ENCODE measurements at regions of chr12 and their contacts with region 1.

Region 1: GRCh38 chr12:108562348-108563135 is at the start of gene ISCU:
- DNase-seq: peak; percentile 99
- H3K4me3 ChIP-seq: peak within 1 kb of the TSS; percentile 71 to 98 (median 96)
- H3K27ac ChIP-seq: peak within 1 kb of the TSS; percentile 90 to 98 (median 96)
- H3K4me1 ChIP-seq: peaks cover 19 to 67% (median 45%) of the 10 kb centered on the region in 4 donors
- H3K27me3 ChIP-seq: no peaks in the 10 kb centered on the region
- CTCF ChIP-seq: no peak
- EP300 ChIP-seq: no peak
- POLR2A ChIP-seq: peak; percentile 96
- total RNA-seq, gene ISCU: 113 to 155 (median 130) TPM

Region 2: DNA sequence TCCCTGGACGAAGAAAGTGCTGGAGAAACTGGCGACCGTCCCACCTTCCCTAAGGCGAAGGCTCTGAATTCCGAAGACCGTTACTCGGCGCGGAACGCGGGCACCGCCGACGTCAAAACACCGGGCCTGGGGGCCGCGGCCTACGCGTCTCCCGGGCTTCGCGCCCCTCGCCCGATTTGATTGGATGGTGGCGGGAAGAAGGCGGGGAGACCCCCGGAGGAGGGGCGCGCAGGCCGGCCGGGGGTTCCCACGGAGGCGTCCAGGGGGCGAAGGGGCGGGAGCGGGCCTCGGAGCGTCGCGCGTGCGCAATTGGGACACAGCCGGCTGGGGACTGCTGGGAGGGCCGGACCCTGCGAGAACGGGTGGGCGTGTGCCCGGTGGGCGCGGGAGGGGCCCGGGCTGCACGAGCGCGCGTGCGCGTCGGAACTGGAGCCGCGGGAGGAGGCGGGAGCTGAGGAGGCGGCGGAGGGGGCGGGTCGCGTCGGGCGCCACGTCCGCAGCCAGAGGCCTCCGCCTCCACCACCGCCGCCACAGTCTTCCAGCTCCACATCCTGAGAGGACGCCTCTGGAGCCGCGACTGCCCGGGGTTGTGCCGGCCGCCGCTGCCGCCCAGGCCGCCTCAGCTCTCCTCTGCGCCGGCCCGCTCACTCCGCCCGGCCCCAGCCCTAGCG is 1607.0 kb before region 1 on chr12 and contains the start of gene TMEM263:
- in situ Hi-C with region 1: no loop called
- intact Hi-C with region 1: loop called (anchors 10 kb)
- DNase-seq: peak; percentile 93
- H3K4me3 ChIP-seq: peak within 1 kb of the TSS; percentile 55 to 95 (median 86)
- H3K27ac ChIP-seq: peak within 1 kb of the TSS; percentile 94 to 98 (median 95)
- H3K4me1 ChIP-seq: peaks cover 9 to 40% (median 28%) of the 10 kb centered on the region in 4 donors
- H3K27me3 ChIP-seq: no peaks in the 10 kb centered on the region
- CTCF ChIP-seq: no peak
- EP300 ChIP-seq: no peak
- POLR2A ChIP-seq: peak; percentile 79
- total RNA-seq, gene TMEM263: 13.5 to 34.6 (median 18.7) TPM

Region 3: DNA sequence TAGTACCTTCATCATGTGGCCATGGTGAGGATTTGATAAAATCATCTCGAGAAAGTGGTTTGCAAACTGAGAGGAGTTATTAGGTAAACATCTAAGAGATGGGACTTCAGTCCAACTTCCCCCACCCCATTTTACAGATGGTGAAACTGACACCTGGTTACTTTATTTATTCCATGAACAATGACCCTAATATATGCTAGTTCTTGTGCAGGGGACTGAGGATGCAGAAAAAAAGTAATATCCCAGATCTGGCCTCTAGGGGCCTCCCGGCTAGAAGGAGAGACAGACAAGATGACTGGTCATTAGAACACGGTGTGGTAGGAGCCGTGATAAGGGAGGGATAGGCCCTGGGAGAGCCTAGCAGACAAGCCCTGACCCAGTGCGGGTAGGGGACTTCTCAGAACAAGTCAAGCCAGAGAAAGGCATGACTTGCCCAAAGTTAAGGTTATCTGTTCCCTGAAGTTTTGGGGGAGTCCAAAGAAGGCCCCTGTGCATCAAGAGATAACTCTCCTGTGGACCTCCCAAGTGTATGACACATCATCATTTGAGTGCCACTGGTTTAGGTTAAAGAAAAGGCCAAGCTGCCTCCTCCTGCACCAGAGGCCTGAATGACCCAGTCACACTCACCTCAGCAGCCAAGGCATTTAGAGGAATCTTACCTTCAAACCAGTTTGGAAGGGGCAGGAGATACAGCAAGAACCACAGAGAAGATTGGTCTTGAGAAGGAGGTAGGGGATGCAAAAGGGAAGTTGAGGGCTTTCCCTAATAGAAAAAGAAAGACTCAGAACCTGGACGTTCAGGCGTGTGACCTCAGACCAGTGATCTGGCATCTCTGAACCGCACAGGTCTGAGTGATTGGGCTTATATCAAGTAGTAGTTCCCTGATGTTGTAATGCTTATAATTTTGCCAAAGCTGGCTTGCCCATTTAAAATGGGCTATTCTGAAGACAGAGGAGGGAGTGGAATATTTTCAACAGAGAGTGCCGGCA is 225.0 kb before region 1 on chr12:
- in situ Hi-C with region 1: no loop called
- intact Hi-C with region 1: no loop called
- DNase-seq: no peak
- H3K4me3 ChIP-seq: peak overlapping the region in 2 of 4 donors; percentile 4
- H3K27ac ChIP-seq: peak overlapping the region; percentile 43 to 66 (median 52)
- H3K4me1 ChIP-seq: peaks cover 0 to 15% (median 3%) of the 10 kb centered on the region in 4 donors
- H3K27me3 ChIP-seq: peaks cover 14% of the 10 kb centered on the region
- CTCF ChIP-seq: peak in 4 of 5 experiments; percentile 31 to 41 (median 34)
- EP300 ChIP-seq: no peak
- POLR2A ChIP-seq: peak; percentile 27

Region 4: GRCh38 chr12:108618079-108618952 is 55.8 kb after region 1 on chr12:
- in situ Hi-C with region 1: loop called in 3 of 4 experiments (anchors 5 to 10 kb)
- intact Hi-C with region 1: loop called (anchors 5 kb)
- DNase-seq: peak; percentile 84
- H3K4me3 ChIP-seq: no peak overlapping the region
- H3K27ac ChIP-seq: peak overlapping the region in 1 of 4 donors; percentile 40
- H3K4me1 ChIP-seq: peaks cover 0 to 23% (median 0%) of the 10 kb centered on the region in 4 donors
- H3K27me3 ChIP-seq: no peaks in the 10 kb centered on the region
- CTCF ChIP-seq: peak; percentile 91 to 99 (median 97)
- EP300 ChIP-seq: no peak
- POLR2A ChIP-seq: no peak

Region 5: GRCh38 chr12:108803428-108804105 is 241.0 kb after region 1 on chr12:
- in situ Hi-C with region 1: loop called in 2 of 4 experiments (anchors 10 kb)
- intact Hi-C with region 1: no loop called
- DNase-seq: peak; percentile 82
- H3K4me3 ChIP-seq: no peak overlapping the region
- H3K27ac ChIP-seq: peak overlapping the region; percentile 80 to 93 (median 88)
- H3K4me1 ChIP-seq: peaks cover 15 to 63% (median 37%) of the 10 kb centered on the region in 4 donors
- H3K27me3 ChIP-seq: no peaks in the 10 kb centered on the region
- CTCF ChIP-seq: peak; percentile 92 to 97 (median 96)
- EP300 ChIP-seq: peak; percentile 38
- POLR2A ChIP-seq: no peak

Region 6: DNA sequence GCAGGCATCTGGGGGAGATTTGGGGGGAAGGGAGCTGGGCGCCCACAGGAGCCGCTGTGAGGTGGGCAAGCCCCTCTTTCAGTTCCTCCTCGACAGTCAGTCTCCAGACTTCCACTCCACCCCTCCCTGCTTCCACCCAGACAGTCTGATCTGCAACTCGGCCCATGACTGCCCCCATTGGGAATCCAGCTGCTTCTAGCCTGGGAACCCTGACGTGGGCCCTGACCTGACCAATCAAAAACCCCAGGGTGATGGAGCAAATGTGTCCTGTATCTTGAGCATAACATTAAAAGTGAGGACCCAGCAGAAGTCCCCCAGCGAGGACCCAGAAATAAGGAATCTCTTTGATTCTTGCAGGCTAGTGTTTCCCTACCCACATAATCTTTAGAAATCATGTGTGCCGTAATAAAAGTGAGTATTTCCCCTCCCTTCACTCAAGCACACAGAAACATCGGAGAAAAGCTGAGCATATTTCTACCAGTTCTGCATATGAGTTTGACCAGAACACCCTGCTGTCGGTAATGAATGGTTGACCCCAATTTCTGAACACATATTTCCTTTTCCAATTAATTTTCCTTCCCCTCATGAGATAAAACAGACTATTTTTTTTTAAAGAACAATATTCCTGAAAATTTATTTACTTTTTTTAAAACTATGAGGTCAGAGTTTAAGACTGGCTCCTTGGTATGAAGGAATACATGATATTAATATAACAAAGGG is 288.5 kb after region 1 on chr12:
- in situ Hi-C with region 1: no loop called
- intact Hi-C with region 1: loop called (anchors 5 kb)
- DNase-seq: no peak
- H3K4me3 ChIP-seq: no peak overlapping the region
- H3K27ac ChIP-seq: peak overlapping the region; percentile 28 to 94 (median 64)
- H3K4me1 ChIP-seq: peaks cover 8 to 63% (median 26%) of the 10 kb centered on the region in 4 donors
- H3K27me3 ChIP-seq: no peaks in the 10 kb centered on the region
- CTCF ChIP-seq: no peak
- EP300 ChIP-seq: no peak
- POLR2A ChIP-seq: no peak

Region 7: DNA sequence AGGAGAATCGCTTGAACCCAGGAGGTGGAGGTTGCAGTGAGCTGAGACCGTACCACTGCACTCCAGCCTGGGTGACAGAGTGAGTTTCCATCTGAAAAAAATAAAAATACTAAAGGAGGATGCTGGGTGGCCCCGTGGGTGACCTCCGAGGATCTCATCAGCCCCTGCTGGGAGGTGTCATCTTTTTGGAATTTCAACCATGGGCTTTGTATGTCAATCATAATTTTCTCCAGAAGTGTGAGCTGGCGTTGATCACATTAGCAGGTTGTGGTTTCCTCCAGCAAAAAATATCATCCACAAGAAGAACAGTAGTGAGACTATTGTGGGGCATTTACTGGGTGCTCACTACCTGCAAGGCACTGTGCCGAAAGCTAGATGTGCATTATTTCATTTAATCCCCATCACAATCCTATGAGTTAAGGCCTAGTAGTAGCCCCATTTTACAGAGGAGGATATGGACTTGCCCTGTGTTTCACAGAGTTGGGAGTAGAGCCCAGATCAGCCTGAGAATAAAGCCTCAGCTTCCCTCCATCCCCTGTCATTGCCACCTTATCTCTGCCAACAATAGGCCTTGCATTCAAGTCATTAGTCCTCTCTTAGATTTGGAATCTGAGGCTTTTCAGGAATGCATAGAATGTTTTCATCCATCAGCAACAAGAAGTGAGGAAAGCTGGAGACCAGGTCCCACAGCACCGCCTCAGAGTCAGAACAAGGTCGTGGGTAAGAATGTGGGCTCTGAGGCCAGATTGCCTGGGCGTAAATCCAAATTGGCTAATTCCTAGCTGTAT is 418.5 kb after region 1 on chr12:
- in situ Hi-C with region 1: no loop called
- intact Hi-C with region 1: no loop called
- DNase-seq: no peak
- H3K4me3 ChIP-seq: no peak overlapping the region
- H3K27ac ChIP-seq: no peak overlapping the region
- H3K4me1 ChIP-seq: no peaks in the 10 kb centered on the region
- H3K27me3 ChIP-seq: no peaks in the 10 kb centered on the region
- CTCF ChIP-seq: no peak
- EP300 ChIP-seq: no peak
- POLR2A ChIP-seq: no peak

Region 8: GRCh38 chr12:109052414-109053323 is 490.1 kb after region 1 on chr12 and contains the start of gene USP30:
- in situ Hi-C with region 1: no loop called
- intact Hi-C with region 1: loop called (anchors 2 kb)
- DNase-seq: peak; percentile 89
- H3K4me3 ChIP-seq: peak within 1 kb of the TSS; percentile 76 to 100 (median 88)
- H3K27ac ChIP-seq: peak within 1 kb of the TSS; percentile 90 to 96 (median 92)
- H3K4me1 ChIP-seq: peaks cover 14 to 36% (median 17%) of the 10 kb centered on the region in 4 donors
- H3K27me3 ChIP-seq: no peaks in the 10 kb centered on the region
- CTCF ChIP-seq: no peak
- EP300 ChIP-seq: no peak
- POLR2A ChIP-seq: peak; percentile 58
- total RNA-seq, gene USP30: 6.8 to 38.9 (median 24.9) TPM

Region 9: DNA sequence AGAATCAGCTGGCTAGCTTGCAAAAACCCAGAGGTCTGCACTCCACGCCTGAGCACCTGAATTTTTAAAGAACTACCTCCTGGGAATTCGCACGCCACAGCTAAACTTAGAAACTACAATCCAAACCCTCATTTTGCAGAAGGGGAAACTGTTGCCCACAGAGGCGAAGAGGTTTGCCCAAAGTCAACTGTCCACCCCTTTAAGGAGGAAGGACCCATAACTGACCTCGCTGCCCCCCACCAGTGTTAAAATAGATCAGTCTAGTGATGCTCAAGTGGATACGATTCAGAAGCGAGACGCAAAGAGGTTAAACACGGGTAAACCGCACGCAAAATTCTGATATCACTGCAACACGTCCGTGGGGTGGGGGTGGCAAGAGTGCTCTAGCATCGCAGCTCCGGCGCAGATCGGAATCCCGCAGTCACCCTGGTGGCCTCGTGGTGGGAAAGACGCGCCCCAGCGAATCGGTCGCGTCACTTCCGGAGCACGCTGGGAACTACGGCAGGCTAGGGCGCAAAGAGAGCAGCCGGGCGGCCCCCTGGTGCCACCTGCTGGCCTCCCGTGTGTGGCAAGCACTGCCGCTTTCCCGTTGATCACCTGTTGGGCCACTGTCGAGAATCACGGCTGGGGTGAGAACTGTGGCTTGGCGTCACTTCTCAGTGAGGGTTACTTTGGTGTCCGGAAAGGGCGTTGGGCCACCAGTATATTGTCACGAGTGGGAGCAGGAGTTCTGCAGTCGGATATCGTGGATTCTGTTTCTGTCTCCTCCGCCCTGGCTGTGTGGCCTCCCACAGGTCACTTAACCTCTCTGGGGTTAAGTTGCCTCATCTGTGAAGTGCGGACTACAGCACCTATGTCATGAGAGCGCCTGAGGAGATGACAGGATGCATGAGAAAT is 530.7 kb after region 1 on chr12 and contains the start of gene ALKBH2:
- in situ Hi-C with region 1: loop called in 2 of 4 experiments (anchors 25 kb)
- intact Hi-C with region 1: no loop called
- DNase-seq: peak; percentile 95
- H3K4me3 ChIP-seq: peak within 1 kb of the TSS; percentile 30 to 54 (median 36)
- H3K27ac ChIP-seq: peak within 1 kb of the TSS; percentile 73 to 83 (median 75)
- H3K4me1 ChIP-seq: peaks cover 15 to 36% (median 22%) of the 10 kb centered on the region in 4 donors
- H3K27me3 ChIP-seq: no peaks in the 10 kb centered on the region
- CTCF ChIP-seq: peak; percentile 96 to 99 (median 98)
- EP300 ChIP-seq: peak; percentile 82
- POLR2A ChIP-seq: peak; percentile 25
- total RNA-seq, gene ALKBH2: 3.4 to 11.1 (median 7.1) TPM in 3 of 4 donors, not detected in the other